Right cardiac atrium (tissue), 5 donors: ENCODE measurements at regions of chr12 and their contacts with region 1.

Region 1: DNA sequence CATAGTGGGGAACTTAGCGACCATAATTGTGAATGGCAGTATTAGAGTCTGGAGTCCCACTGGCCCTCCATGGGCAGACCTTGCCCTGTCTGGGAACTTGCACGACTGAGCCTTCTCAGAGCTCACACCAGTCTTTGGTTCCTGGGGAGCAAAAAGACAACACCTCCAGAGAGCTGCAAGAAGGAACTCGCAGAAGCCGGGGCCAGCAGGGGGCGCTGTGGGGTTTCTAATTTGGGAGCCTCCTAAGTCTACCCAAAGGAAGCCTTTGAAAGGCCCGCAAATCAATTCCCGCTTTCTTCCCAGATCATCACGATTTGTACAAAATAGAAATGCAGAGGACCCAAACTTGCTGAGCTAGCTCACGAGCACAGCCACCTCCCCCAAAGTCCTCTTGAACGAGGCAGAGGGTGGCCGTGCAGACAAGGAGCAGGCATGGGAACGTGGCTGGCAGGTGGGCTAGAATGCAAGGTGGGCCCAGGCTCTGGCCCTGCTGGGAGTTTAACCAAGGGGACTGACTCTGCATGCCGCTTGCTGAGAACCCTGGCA is 46.3 kb upstream of the FBXO21 start:
- DNase-seq: peak; percentile 76 to 92 (median 89)
- ATAC-seq: peak; percentile 43 to 68
- H3K4me3 ChIP-seq: no peak overlapping the region
- H3K27ac ChIP-seq: no peak overlapping the region
- H3K4me1 ChIP-seq: no peaks in the 10 kb centered on the region
- H3K27me3 ChIP-seq: no peaks in the 10 kb centered on the region

Region 2: GRCh38 chr12:117279606-117280005 is 43.1 kb after region 1 on chr12:
- intact Hi-C with region 1: no loop called
- DNase-seq: no peak
- ATAC-seq: no peak
- H3K4me3 ChIP-seq: no peak overlapping the region
- H3K27ac ChIP-seq: no peak overlapping the region
- H3K4me1 ChIP-seq: no peaks in the 10 kb centered on the region
- H3K27me3 ChIP-seq: no peaks in the 10 kb centered on the region

Region 3: GRCh38 chr12:117538032-117538690 is 301.6 kb after region 1 on chr12:
- intact Hi-C with region 1: no loop called
- DNase-seq: no peak
- ATAC-seq: no peak
- H3K4me3 ChIP-seq: no peak overlapping the region
- H3K27ac ChIP-seq: no peak overlapping the region
- H3K4me1 ChIP-seq: no peaks in the 10 kb centered on the region
- H3K27me3 ChIP-seq: no peaks in the 10 kb centered on the region

Region 4: DNA sequence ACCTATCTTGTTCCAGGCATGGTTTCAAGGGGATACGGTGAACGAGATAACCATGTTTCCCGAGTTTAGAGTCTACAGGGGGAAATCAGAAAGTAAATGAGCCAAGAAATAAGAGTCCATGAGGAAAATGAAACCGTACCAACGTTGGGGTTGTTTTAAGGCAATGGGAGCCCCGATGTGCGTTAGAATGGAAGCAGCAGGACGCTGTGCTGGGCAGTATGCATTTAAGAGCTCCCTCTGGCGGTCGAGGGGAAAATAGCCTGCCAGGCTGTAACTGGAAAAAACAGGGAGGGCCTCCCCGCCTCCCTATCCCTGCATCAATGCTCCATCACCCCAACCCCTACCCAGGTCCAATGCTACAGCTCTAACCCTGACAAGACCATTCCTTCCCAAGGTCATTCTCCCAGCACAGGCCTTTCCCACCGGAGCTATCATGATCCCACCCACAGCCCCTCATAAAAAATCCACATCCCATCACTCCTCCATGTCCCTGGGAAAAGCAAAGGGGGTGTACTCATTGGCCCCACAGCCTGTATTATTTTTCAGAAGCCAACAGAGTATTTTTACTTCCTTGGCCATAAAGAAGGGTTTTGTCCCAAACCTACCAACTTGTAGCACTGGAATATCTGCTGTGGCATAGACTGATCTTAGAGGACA is 351.2 kb after region 1 on chr12:
- intact Hi-C with region 1: loop called in 1 of 4 experiments (anchors 10 kb)
- DNase-seq: peak; percentile 32 to 76 (median 73)
- ATAC-seq: peak; percentile 51 to 79
- H3K4me3 ChIP-seq: no peak overlapping the region
- H3K27ac ChIP-seq: no peak overlapping the region
- H3K4me1 ChIP-seq: no peaks in the 10 kb centered on the region
- H3K27me3 ChIP-seq: no peaks in the 10 kb centered on the region